ENCODE measurements at regions of chr2 and their contacts with region 1.

Region 1: GRCh38 chr2:39513641-39514094 is 76.6 kb upstream of the MAP4K3 start:
- DNase-seq: peak in 1 of 2 donors; percentile 86
- ATAC-seq: peak; percentile 39 to 79 (median 58)
- H3K4me3 ChIP-seq: no peak overlapping the region
- H3K27ac ChIP-seq: peak overlapping the region; percentile 6 to 90 (median 77)
- H3K4me1 ChIP-seq: peaks cover 30 to 100% (median 93%) of the 10 kb centered on the region in 9 donors
- H3K27me3 ChIP-seq: no peaks in the 10 kb centered on the region
- CTCF ChIP-seq: peak; percentile 24 to 80 (median 69)

Region 2: DNA sequence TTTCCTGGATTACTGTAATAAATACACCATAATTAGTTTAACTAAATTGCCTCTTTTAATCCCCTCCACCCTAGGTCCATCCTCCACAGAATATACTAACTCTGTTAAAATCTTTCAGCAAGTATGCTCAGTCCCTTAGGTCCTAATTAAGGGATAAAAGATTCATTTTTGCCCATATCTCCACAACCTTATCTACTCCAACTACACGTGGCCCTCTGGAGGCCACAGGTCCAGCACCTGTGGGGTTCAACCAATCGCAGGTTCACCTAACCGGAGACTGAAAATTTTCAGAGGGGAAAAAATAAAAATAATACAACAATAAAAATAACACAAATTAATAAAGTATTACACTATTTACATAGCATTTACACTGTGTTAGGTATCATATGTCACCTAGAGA is 163.0 kb before region 1 on chr2:
- intact Hi-C with region 1: no loop called
- DNase-seq: no peak
- ATAC-seq: no peak
- H3K4me3 ChIP-seq: no peak overlapping the region
- H3K27ac ChIP-seq: no peak overlapping the region
- H3K4me1 ChIP-seq: peaks cover 0 to 52% (median 26%) of the 10 kb centered on the region in 9 donors
- H3K27me3 ChIP-seq: no peaks in the 10 kb centered on the region
- CTCF ChIP-seq: no peak

Region 3: DNA sequence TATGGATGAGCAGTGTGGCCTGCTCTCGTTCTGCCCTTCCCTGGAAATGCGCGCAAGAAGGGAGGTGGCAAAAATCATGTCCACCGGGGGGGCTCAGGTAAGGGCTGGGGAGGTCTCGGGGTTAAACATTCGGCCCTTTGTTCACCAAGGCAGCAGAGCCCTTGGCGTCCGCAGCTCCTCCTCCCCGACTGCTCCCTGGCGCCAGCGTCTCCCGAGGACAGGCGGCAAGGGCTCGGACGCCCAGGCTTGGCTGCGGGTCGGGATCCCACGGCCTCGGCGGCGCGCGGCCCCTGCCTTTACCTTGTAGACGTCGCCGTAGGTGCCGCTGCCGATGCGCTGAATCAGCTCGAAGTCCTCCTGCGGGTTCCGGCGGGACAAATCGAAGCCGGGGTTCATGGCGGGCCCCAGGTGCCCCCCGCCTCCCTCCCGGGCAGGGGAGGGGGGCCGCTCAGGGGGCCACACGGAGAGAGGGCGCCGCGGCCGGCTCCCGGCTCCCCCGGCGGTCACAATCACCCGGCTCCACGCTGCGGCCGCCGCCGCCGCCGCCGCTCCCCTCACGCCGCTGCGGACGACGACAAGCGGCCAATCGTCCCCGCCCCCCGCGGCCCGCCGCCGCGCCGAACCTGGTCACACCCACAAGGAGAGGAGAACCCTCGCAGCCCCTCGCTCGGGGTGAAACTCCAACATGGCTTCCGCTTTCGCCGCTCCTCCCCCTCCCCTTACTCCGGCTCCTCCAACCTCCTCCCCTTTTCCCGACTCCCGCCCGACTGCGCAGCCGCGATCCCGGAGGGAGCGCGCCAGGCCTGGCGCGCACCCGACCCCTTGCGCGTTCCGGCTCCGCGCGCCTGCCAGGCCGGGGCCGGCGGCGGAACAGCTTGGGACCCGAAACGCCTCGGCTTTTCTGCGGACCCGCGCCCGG is 76.8 kb before region 1 on chr2 and contains the start of gene MAP4K3:
- intact Hi-C with region 1: loop called in 4 of 10 experiments (anchors 5 kb)
- DNase-seq: peak; percentile 93 to 96
- ATAC-seq: peak; percentile 92 to 95 (median 94)
- H3K4me3 ChIP-seq: peak within 1 kb of the TSS; percentile 65 to 97 (median 92)
- H3K27ac ChIP-seq: peak within 1 kb of the TSS; percentile 90 to 99 (median 98)
- H3K4me1 ChIP-seq: peaks cover 5 to 71% (median 55%) of the 10 kb centered on the region in 9 donors
- H3K27me3 ChIP-seq: no peaks in the 10 kb centered on the region
- CTCF ChIP-seq: no peak
- total RNA-seq, gene MAP4K3: 27.6 to 49.0 (median 40.2) TPM

Region 4: GRCh38 chr2:39469807-39470206 is 43.9 kb before region 1 on chr2:
- intact Hi-C with region 1: loop called in 1 of 10 experiments (anchors 5 kb)
- DNase-seq: no peak
- ATAC-seq: peak; percentile 30 to 89 (median 78)
- H3K4me3 ChIP-seq: peak overlapping the region in 2 of 10 donors; percentile 2 to 5
- H3K27ac ChIP-seq: peak overlapping the region; percentile 12 to 77 (median 60)
- H3K4me1 ChIP-seq: peaks cover 4 to 44% (median 35%) of the 10 kb centered on the region in 9 donors
- H3K27me3 ChIP-seq: no peaks in the 10 kb centered on the region
- CTCF ChIP-seq: no peak

Region 5: DNA sequence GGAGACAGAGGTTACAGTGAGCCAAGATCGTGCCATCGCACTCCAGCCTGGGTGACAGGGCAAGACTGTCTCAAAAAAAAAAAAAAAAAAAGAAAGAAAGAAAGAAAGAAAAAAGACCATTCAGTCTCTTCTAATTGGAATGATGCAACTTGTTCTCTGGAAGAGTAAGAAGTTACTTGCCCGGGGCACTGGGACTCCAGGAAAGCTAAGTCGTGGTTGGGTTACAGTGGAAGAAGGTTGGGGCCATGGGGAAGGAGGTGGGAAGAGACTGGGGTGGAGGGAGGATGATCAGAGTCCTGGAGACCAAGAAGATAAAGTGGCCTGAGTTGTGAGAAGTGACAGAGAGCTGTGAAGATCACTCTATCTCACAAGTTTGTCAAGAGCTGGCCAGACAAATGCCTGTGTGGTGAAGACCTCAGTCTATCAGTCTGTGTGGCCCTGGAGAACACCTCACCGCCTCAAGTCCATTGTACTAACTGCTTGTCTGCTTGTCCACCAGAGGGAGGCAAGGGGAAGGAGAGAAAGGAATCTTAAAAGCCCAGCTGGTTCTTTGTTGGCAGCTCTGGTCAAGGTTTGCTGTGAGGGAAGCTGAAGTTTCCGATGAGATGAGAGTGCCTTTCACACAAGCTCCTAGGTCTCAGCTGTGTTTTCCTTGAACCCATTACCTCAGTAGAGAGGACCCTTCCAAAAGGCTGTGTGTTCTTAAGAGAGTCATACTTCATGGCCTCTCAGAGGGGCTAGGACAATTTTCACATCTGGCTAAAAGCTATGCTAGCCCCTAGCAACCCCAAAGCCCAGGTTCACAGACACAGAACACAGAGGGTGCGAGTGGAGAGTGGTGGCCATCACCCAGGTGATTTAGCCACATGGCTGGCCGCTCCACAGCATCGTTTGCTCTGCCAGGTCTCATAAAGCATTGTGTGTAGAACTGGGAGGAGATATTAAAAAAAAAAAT is 80.0 kb after region 1 on chr2:
- intact Hi-C with region 1: loop called in 2 of 10 experiments (anchors 5 to 10 kb)
- DNase-seq: peak in 1 of 2 donors; percentile 70
- ATAC-seq: peak; percentile 71 to 92 (median 88)
- H3K4me3 ChIP-seq: no peak overlapping the region
- H3K27ac ChIP-seq: peak overlapping the region in 1 of 10 donors; percentile 11
- H3K4me1 ChIP-seq: peaks cover 0 to 11% (median 6%) of the 10 kb centered on the region in 9 donors
- H3K27me3 ChIP-seq: no peaks in the 10 kb centered on the region
- CTCF ChIP-seq: peak; percentile 44 to 74 (median 64)

Region 6: GRCh38 chr2:39696838-39697237 is 183.2 kb after region 1 on chr2:
- intact Hi-C with region 1: loop called (anchors 1 to 10 kb)
- DNase-seq: peak in 1 of 2 donors; percentile 12
- ATAC-seq: peak; percentile 44 to 86 (median 73)
- H3K4me3 ChIP-seq: no peak overlapping the region
- H3K27ac ChIP-seq: peak overlapping the region in 8 of 10 donors; percentile 37 to 75 (median 56)
- H3K4me1 ChIP-seq: peaks cover 0 to 34% (median 22%) of the 10 kb centered on the region in 9 donors
- H3K27me3 ChIP-seq: no peaks in the 10 kb centered on the region
- CTCF ChIP-seq: peak; percentile 16 to 72 (median 53)

Region 7: GRCh38 chr2:39728941-39729351 is 215.3 kb after region 1 on chr2:
- intact Hi-C with region 1: loop called in 3 of 10 experiments (anchors 5 to 10 kb)
- DNase-seq: peak in 1 of 2 donors; percentile 23
- ATAC-seq: peak in 5 of 8 donors; percentile 43 to 56 (median 46)
- H3K4me3 ChIP-seq: no peak overlapping the region
- H3K27ac ChIP-seq: no peak overlapping the region
- H3K4me1 ChIP-seq: peaks cover 0 to 19% (median 0%) of the 10 kb centered on the region in 9 donors
- H3K27me3 ChIP-seq: no peaks in the 10 kb centered on the region
- CTCF ChIP-seq: peak in 8 of 9 donors; percentile 29 to 72 (median 66)